H1 (cell line): ENCODE measurements at regions of chr1 and their contacts with region 1.

Region 1: GRCh38 chr1:113042285-113043143 is 30.5 kb upstream of the LRIG2 start:
- DNase-seq: peak; percentile 85 to 96
- H3K4me3 ChIP-seq: peak overlapping the region in 3 of 4 experiments; percentile 14 to 37 (median 21); a peak in 5 of 8 replicates
- H3K27ac ChIP-seq: peak overlapping the region; percentile 92
- H3K4me1 ChIP-seq: peaks cover 15 to 35% (median 28%) of the 10 kb centered on the region in 4 experiments
- H3K27me3 ChIP-seq: no peaks in the 10 kb centered on the region
- CTCF ChIP-seq: peak; percentile 65 to 76 (median 68)
- EP300 ChIP-seq: peak in 1 of 2 experiments; percentile 54; a peak in 1 of 3 replicates
- POLR2A ChIP-seq: peak in 1 of 2 experiments; percentile 50; a peak in 1 of 3 replicates
- RAD21 ChIP-seq: peak; percentile 91 to 93

Region 2: GRCh38 chr1:112818990-112819689 is 223.4 kb before region 1 on chr1:
- CTCF ChIA-PET with region 1: no interaction called
- POLR2A ChIA-PET with region 1: interaction called, 15 read pairs
- DNase-seq: no peak
- H3K4me3 ChIP-seq: no peak overlapping the region
- H3K27ac ChIP-seq: peak overlapping the region; percentile 57
- H3K4me1 ChIP-seq: peaks cover 7 to 27% (median 21%) of the 10 kb centered on the region in 4 experiments
- H3K27me3 ChIP-seq: no peaks in the 10 kb centered on the region
- CTCF ChIP-seq: no peak
- EP300 ChIP-seq: no peak
- POLR2A ChIP-seq: no peak
- RAD21 ChIP-seq: no peak

Region 3: DNA sequence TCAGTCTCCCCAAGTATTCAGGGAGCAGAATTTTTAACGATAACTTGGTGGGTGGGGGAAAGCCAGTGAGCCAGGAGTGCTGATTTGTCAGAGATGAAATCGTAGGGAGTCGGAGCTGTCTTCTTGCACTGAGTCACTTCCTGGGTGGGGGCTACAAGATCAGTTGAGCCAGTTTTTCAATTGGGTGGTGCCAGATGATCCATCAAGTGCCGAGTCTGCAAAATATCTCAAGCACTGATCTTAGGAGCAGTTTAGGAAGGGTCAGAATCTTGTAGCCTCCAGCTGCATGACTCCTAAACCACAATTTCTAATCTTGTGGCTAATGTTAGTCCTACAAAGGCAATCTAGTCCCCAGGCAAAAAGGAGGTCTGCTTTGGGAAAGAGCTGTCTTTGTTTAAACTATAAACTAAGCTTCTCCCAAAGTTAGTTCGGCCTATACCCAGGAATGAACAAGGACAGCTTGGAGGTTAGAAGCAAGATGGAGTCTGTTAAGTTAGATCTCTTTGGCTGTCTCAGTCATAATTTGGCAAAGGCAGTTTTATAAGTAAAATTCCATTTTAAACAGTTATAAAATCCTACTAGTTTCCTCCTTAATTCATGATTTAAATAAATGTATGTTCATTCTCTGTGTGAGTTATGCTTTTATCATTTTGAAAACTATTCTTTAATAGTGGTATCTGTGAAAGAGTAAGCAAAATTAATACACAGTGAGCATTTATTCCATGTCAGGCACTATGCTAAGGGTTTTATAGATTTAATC is 138.3 kb before region 1 on chr1:
- CTCF ChIA-PET with region 1: interaction called, 4 read pairs
- POLR2A ChIA-PET with region 1: interaction called, 32 read pairs
- DNase-seq: peak in 1 of 2 experiments; percentile 44
- H3K4me3 ChIP-seq: no peak overlapping the region
- H3K27ac ChIP-seq: no peak overlapping the region
- H3K4me1 ChIP-seq: peaks cover 2 to 19% (median 8%) of the 10 kb centered on the region in 4 experiments; a peak in 4 of 7 replicates
- H3K27me3 ChIP-seq: no peaks in the 10 kb centered on the region
- CTCF ChIP-seq: no peak
- EP300 ChIP-seq: no peak
- POLR2A ChIP-seq: no peak
- RAD21 ChIP-seq: no peak

Region 4: DNA sequence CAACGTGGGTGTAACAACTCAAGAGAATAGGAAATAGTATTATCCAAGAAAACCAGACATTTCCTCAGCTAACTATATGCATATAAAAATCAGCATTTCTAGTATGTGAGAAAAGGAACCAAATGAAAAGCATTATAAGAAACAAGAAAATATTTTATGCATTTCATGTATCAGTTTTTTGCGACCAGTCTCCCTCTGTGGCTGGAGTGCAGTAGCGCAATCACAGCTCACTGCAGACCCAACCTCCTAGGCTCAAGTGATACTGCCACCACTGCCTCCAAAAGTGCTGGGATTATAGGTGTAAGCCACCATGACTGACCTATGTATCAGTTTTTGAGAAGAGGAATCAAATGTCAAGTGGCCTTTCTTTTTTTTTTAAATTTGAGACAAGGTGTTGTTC is 117.5 kb before region 1 on chr1:
- CTCF ChIA-PET with region 1: interaction called, 10 read pairs
- POLR2A ChIA-PET with region 1: interaction called, 6 read pairs
- DNase-seq: no peak
- H3K4me3 ChIP-seq: no peak overlapping the region
- H3K27ac ChIP-seq: no peak overlapping the region
- H3K4me1 ChIP-seq: no peaks in the 10 kb centered on the region; a peak in 1 of 7 replicates
- H3K27me3 ChIP-seq: no peaks in the 10 kb centered on the region
- CTCF ChIP-seq: peak in 1 of 3 experiments; percentile 2; a peak in 1 of 4 replicates
- EP300 ChIP-seq: no peak
- POLR2A ChIP-seq: no peak
- RAD21 ChIP-seq: no peak

Region 5: DNA sequence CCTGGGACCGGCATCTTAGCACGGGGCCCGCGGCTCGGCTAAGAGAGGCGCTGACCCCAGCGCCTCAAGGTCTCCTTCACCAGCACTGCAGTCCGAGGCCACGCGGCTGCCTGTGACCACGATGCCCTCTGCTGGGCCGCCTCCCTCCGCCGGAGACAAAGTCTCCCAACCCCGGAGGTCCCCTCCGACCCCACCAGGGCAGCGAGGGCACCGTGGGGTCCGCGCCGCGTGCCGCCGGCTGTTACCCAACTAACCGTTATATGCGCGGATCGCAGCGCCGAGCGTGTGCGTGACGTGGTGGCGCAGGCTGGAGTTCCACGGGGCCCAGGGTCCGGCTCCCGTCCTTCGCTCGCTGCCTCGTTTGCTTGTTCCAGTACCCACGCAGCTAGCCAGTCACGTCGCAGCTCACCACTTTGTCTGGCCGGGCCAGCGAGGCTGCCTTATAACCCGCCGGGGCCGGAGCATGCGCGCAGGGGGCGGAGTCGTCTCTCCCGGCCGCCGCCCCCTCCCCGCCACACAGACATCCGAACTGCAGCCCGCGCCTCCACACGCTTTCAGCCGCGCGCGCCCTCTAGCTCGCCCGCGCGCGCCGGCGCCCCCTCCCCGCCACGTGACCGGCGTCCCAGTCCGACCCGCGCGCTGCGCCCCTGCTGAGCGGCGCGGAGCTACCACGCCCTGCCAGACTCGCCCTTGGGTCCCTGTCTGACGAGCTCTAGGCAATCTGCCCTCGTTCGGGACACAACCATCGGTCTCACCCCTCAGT is 86.6 kb before region 1 on chr1 and contains the start of gene SLC16A1:
- CTCF ChIA-PET with region 1: interaction called, 23 read pairs
- POLR2A ChIA-PET with region 1: interaction called, 50 read pairs
- DNase-seq: peak; percentile 49 to 89
- H3K4me3 ChIP-seq: peak within 1 kb of the TSS; percentile 81 to 95 (median 90)
- H3K27ac ChIP-seq: peak within 1 kb of the TSS; percentile 79
- H3K4me1 ChIP-seq: peaks cover 4 to 8% (median 5%) of the 10 kb centered on the region in 4 experiments; a peak in 5 of 7 replicates
- H3K27me3 ChIP-seq: no peaks in the 10 kb centered on the region
- CTCF ChIP-seq: peak in 2 of 3 experiments; percentile 21 to 22; a peak in 2 of 4 replicates
- EP300 ChIP-seq: no peak
- POLR2A ChIP-seq: peak; percentile 47 to 67
- RAD21 ChIP-seq: no peak; a peak in 1 of 4 replicates
- total RNA-seq, gene SLC16A1: 435 and 442 TPM in 2 replicates

Region 6: GRCh38 chr1:113031171-113031933 is 11.2 kb before region 1 on chr1:
- CTCF ChIA-PET with region 1: interaction called, 15 read pairs
- POLR2A ChIA-PET with region 1: interaction called, 106 read pairs
- DNase-seq: no peak
- H3K4me3 ChIP-seq: no peak overlapping the region
- H3K27ac ChIP-seq: no peak overlapping the region
- H3K4me1 ChIP-seq: peaks cover 2 to 18% (median 12%) of the 10 kb centered on the region in 4 experiments; a peak in 5 of 7 replicates
- H3K27me3 ChIP-seq: no peaks in the 10 kb centered on the region
- CTCF ChIP-seq: no peak
- EP300 ChIP-seq: no peak
- POLR2A ChIP-seq: no peak
- RAD21 ChIP-seq: no peak

Region 7: GRCh38 chr1:113072757-113073478 is 30.4 kb after region 1 on chr1 and contains the start of gene LRIG2:
- CTCF ChIA-PET with region 1: interaction called, 50 read pairs
- POLR2A ChIA-PET with region 1: interaction called, 45 read pairs
- DNase-seq: peak; percentile 98
- H3K4me3 ChIP-seq: peak within 1 kb of the TSS; percentile 52 to 97 (median 88)
- H3K27ac ChIP-seq: peak within 1 kb of the TSS; percentile 92
- H3K4me1 ChIP-seq: peaks cover 0 to 5% (median 2%) of the 10 kb centered on the region in 4 experiments; a peak in 4 of 7 replicates
- H3K27me3 ChIP-seq: no peaks in the 10 kb centered on the region
- CTCF ChIP-seq: peak; percentile 72 to 83 (median 76)
- EP300 ChIP-seq: no peak
- POLR2A ChIP-seq: peak; percentile 85 to 86
- RAD21 ChIP-seq: peak; percentile 75 to 80
- total RNA-seq, gene LRIG2: 20.4 and 20.9 TPM in 2 replicates

Region 8: GRCh38 chr1:113191579-113192076 is 149.1 kb after region 1 on chr1:
- CTCF ChIA-PET with region 1: no interaction called
- POLR2A ChIA-PET with region 1: no interaction called
- DNase-seq: no peak
- H3K4me3 ChIP-seq: no peak overlapping the region
- H3K27ac ChIP-seq: no peak overlapping the region
- H3K4me1 ChIP-seq: peaks cover 0 to 3% (median under 1%) of the 10 kb centered on the region in 4 experiments; a peak in 2 of 7 replicates
- H3K27me3 ChIP-seq: no peaks in the 10 kb centered on the region
- CTCF ChIP-seq: no peak
- EP300 ChIP-seq: no peak
- POLR2A ChIP-seq: no peak
- RAD21 ChIP-seq: no peak